MCF 10A (cell line): ENCODE measurements at regions of chr5 and their contacts with region 1.

Region 1: GRCh38 chr5:145887976-145888574 is 15.3 kb upstream of the GRXCR2 start:
- DNase-seq: peak; percentile 77
- H3K4me3 Mint-ChIP-seq: no peak overlapping the region
- H3K27ac Mint-ChIP-seq: no peak overlapping the region
- H3K4me1 Mint-ChIP-seq: peaks cover 5% of the 10 kb centered on the region
- H3K27me3 Mint-ChIP-seq: no peaks in the 10 kb centered on the region
- CTCF ChIP-seq: peak; percentile 79

Region 2: GRCh38 chr5:145668714-145669113 is 219.4 kb before region 1 on chr5:
- CTCF ChIA-PET with region 1: no interaction called
- POLR2A ChIA-PET with region 1: no interaction called
- intact Hi-C with region 1: no loop called
- DNase-seq: no peak
- H3K4me3 Mint-ChIP-seq: no peak overlapping the region
- H3K27ac Mint-ChIP-seq: no peak overlapping the region
- H3K4me1 Mint-ChIP-seq: no peaks in the 10 kb centered on the region
- H3K27me3 Mint-ChIP-seq: no peaks in the 10 kb centered on the region
- CTCF ChIP-seq: no peak

Region 3: DNA sequence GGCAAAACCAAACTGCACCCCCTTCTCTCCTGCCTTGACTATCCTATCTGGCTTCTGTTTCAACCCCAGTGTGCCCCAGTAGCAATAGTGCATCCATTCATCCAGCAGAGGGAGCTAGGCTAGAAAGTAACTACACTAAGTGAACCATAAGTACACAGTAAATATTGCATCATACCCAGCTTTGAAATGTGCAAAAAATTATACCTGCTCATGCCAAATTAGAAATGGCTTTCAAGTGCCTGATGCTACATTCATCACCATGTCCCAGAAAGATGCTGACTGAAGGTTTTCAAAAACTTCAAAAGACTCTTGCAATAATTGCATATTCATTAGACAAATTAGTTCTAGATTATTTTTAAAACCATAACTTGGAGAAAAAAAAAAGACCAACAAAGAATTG is 206.4 kb before region 1 on chr5:
- CTCF ChIA-PET with region 1: interaction called, 21 read pairs
- POLR2A ChIA-PET with region 1: no interaction called
- intact Hi-C with region 1: loop called (anchors 5 kb)
- DNase-seq: peak; percentile 94
- H3K4me3 Mint-ChIP-seq: no peak overlapping the region
- H3K27ac Mint-ChIP-seq: no peak overlapping the region
- H3K4me1 Mint-ChIP-seq: no peaks in the 10 kb centered on the region
- H3K27me3 Mint-ChIP-seq: no peaks in the 10 kb centered on the region
- CTCF ChIP-seq: peak; percentile 87

Region 4: GRCh38 chr5:145718956-145719355 is 169.1 kb before region 1 on chr5:
- CTCF ChIA-PET with region 1: no interaction called
- POLR2A ChIA-PET with region 1: no interaction called
- intact Hi-C with region 1: no loop called
- DNase-seq: peak; percentile 57
- H3K4me3 Mint-ChIP-seq: no peak overlapping the region
- H3K27ac Mint-ChIP-seq: no peak overlapping the region
- H3K4me1 Mint-ChIP-seq: no peaks in the 10 kb centered on the region
- H3K27me3 Mint-ChIP-seq: no peaks in the 10 kb centered on the region
- CTCF ChIP-seq: peak; percentile 29

Region 5: GRCh38 chr5:145834917-145835847 is 52.9 kb before region 1 on chr5 and contains the start of gene PRELID2:
- CTCF ChIA-PET with region 1: interaction called, 63 read pairs
- POLR2A ChIA-PET with region 1: interaction called, 5 read pairs
- intact Hi-C with region 1: loop called (anchors 2 kb)
- DNase-seq: peak; percentile 94
- H3K4me3 Mint-ChIP-seq: peak within 1 kb of the TSS; percentile 73
- H3K27ac Mint-ChIP-seq: no peak within 1 kb of the TSS
- H3K4me1 Mint-ChIP-seq: peaks cover 35% of the 10 kb centered on the region
- H3K27me3 Mint-ChIP-seq: no peaks in the 10 kb centered on the region
- CTCF ChIP-seq: no peak
- total RNA-seq, gene PRELID2: 11.4 and 11.7 TPM in 2 replicates

Region 6: DNA sequence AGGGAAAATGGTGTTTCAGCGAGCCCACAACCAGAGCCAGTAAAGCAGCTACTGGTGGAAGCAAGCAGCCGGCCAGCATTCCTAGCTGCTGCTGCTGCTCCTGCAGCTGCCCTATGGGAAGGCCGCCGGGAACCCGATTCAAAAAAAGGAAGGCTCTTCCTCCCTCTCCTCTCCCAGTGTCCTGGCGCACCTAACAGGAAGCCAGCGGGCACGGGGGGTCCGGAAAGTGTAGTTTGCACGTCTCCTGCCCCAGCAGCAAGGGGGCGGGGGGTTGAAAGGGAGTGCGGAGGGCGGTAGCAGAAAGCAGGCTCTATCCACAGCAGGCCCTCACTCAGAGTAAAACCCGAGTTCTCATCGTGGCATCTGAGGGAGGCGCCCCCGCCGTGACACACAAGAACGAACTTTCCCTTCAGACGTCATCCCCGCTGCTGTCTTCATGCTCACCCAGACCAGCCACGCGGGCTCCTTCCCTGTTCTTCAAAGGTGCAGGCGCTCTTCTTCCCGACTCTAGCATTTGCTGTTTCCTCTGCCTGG is 31.7 kb before region 1 on chr5:
- CTCF ChIA-PET with region 1: interaction called, 43 read pairs
- POLR2A ChIA-PET with region 1: interaction called, 3 read pairs
- intact Hi-C with region 1: no loop called
- DNase-seq: no peak
- H3K4me3 Mint-ChIP-seq: no peak overlapping the region
- H3K27ac Mint-ChIP-seq: no peak overlapping the region
- H3K4me1 Mint-ChIP-seq: peaks cover 8% of the 10 kb centered on the region
- H3K27me3 Mint-ChIP-seq: no peaks in the 10 kb centered on the region
- CTCF ChIP-seq: no peak

Region 7: DNA sequence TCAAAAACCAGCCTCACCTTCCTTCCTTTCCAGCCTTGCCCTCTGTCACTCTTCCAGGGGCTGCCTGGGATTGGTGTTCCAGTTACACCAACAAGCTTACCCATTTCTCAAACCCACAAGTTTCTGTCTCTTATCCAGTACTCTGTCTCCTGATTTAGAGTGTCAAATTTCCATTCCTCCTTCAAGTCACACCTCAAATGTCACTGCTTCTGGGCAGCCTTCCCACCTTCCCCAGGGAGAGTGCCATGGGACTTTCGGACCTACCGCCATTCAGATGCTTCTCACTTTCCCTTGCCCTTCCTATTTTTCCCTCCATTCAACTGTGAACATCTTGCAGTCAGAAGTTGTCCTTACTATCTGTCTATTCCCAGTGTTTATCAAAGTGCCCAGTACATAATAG is 13.3 kb before region 1 on chr5:
- CTCF ChIA-PET with region 1: interaction called, 22 read pairs
- POLR2A ChIA-PET with region 1: no interaction called
- intact Hi-C with region 1: no loop called
- DNase-seq: no peak
- H3K4me3 Mint-ChIP-seq: no peak overlapping the region
- H3K27ac Mint-ChIP-seq: no peak overlapping the region
- H3K4me1 Mint-ChIP-seq: no peaks in the 10 kb centered on the region
- H3K27me3 Mint-ChIP-seq: no peaks in the 10 kb centered on the region
- CTCF ChIP-seq: no peak

Region 8: GRCh38 chr5:145908205-145908945 is 20.3 kb after region 1 on chr5:
- CTCF ChIA-PET with region 1: interaction called, 22 read pairs
- POLR2A ChIA-PET with region 1: no interaction called
- intact Hi-C with region 1: no loop called
- DNase-seq: peak; percentile 51
- H3K4me3 Mint-ChIP-seq: no peak overlapping the region
- H3K27ac Mint-ChIP-seq: no peak overlapping the region
- H3K4me1 Mint-ChIP-seq: peaks cover 5% of the 10 kb centered on the region
- H3K27me3 Mint-ChIP-seq: no peaks in the 10 kb centered on the region
- CTCF ChIP-seq: peak; percentile 62

Region 9: DNA sequence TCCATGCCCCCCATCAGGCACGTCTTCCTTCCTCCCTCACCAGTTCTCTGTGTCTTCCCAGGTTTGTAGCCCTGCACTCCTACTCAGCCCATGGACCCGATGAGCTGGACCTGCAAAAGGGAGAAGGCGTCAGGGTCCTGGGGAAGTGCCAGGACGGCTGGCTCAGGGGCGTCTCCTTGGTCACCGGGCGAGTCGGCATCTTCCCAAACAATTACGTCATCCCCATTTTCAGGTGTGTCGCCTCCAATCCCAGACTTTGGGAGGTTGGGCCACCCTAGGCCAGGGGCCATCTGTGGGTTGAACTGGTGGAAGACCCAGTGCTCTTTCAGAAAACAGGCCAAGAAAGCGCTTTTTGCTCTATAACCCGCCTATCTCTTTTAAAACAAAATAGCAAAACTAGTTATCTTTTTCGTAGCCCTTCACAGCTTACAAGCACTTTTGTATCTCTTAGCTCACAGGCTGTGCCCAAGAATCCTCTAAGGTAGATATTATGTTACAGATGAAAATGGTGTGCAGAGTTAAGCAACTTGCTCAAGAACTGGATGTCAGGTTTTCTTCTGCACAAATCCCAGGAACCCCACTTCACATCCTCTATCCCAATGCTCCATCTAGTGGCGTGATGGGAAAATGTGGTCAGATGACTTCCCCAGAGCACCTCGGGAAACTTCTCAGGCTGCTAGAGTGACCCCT is 161.1 kb after region 1 on chr5:
- CTCF ChIA-PET with region 1: interaction called, 18 read pairs
- POLR2A ChIA-PET with region 1: no interaction called
- intact Hi-C with region 1: no loop called
- DNase-seq: peak; percentile 91
- H3K4me3 Mint-ChIP-seq: no peak overlapping the region
- H3K27ac Mint-ChIP-seq: peak overlapping the region; percentile 4
- H3K4me1 Mint-ChIP-seq: peaks cover 31% of the 10 kb centered on the region
- H3K27me3 Mint-ChIP-seq: no peaks in the 10 kb centered on the region
- CTCF ChIP-seq: peak; percentile 90